A673 (cell line): ENCODE measurements at regions of chr4 and their contacts with region 1.

Region 1: DNA sequence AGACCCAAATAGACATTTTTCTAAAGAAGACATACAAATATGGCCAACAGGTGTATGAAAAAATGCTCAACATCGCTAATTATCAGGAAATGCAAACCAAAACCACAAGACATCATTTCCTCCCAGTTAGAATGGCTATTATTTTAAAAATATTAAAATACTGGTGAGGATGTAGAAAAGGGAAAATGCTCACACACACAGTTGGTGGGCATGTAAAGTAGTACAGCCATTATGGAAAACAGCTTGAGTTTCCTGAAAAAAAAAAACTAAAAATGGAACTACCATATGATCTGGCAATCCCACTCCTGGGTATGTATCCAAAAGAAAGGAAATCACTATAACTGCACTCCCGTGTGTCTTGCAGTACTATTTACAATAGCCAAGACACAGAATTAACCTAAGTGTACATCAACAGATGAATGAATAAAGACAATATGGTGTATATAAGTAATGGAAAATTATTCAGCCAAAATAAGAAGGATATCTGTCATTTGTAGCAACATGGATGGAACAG is 128.9 kb upstream of the DKK2 start:
- DNase-seq: peak; percentile 96
- H3K4me3 ChIP-seq: no peak overlapping the region
- H3K27ac ChIP-seq: peak overlapping the region; percentile 98
- H3K4me1 ChIP-seq: peaks cover 34% of the 10 kb centered on the region
- H3K27me3 ChIP-seq: no peaks in the 10 kb centered on the region
- CTCF ChIP-seq: no peak

Region 2: GRCh38 chr4:106773076-106773905 is 391.7 kb before region 1 on chr4:
- CTCF ChIA-PET with region 1: no interaction called
- POLR2A ChIA-PET with region 1: no interaction called
- intact Hi-C with region 1: no loop called
- DNase-seq: no peak
- H3K4me3 ChIP-seq: no peak overlapping the region
- H3K27ac ChIP-seq: no peak overlapping the region
- H3K4me1 ChIP-seq: no peaks in the 10 kb centered on the region
- H3K27me3 ChIP-seq: no peaks in the 10 kb centered on the region
- CTCF ChIP-seq: no peak

Region 3: DNA sequence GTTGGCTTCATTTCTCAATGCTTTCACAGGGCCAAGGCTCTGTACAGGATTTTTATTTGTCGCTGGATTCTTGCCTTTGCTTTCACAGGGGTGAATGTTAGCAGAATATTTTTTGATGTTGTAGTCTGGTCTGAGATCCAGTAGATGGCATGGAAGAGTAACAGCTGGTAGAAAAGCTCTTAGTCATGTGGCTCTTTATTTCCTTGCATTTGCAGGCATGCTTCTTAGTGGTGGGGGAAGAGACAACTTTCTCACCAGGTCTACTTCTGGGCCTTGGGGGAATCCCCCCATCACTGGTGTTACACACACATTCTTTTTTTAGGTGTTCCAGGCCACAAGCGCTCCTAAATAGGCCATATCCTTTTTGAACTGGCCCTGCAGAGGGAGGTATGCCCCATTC is 70.7 kb before region 1 on chr4:
- CTCF ChIA-PET with region 1: no interaction called
- POLR2A ChIA-PET with region 1: no interaction called
- intact Hi-C with region 1: loop called (anchors 1 kb)
- DNase-seq: peak; percentile 82
- H3K4me3 ChIP-seq: no peak overlapping the region
- H3K27ac ChIP-seq: peak overlapping the region; percentile 71
- H3K4me1 ChIP-seq: peaks cover 20% of the 10 kb centered on the region
- H3K27me3 ChIP-seq: no peaks in the 10 kb centered on the region
- CTCF ChIP-seq: peak; percentile 69

Region 4: DNA sequence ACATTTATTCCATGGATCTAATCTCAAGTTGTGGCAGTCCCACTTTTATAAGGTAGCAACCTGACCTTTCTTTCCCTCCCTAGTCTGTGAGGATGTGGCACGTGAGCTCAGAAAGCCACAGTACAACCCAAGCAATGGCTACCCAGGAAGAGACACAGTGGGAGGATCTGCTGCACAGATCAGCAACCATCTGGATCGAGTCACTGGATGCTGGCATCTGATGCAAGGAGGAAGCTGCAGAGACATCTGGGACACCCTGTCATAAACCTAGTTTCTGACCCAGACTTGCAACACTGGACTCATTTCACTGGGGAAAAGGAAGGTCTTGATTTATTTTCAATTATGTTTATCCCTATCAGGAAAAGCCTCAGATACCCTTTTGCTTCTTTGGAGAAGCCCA is 227.9 kb after region 1 on chr4:
- CTCF ChIA-PET with region 1: no interaction called
- POLR2A ChIA-PET with region 1: interaction called, 3 read pairs
- intact Hi-C with region 1: loop called (anchors 1 kb)
- DNase-seq: peak; percentile 67
- H3K4me3 ChIP-seq: no peak overlapping the region
- H3K27ac ChIP-seq: peak overlapping the region; percentile 90
- H3K4me1 ChIP-seq: peaks cover 52% of the 10 kb centered on the region
- H3K27me3 ChIP-seq: no peaks in the 10 kb centered on the region
- CTCF ChIP-seq: no peak

Region 5: DNA sequence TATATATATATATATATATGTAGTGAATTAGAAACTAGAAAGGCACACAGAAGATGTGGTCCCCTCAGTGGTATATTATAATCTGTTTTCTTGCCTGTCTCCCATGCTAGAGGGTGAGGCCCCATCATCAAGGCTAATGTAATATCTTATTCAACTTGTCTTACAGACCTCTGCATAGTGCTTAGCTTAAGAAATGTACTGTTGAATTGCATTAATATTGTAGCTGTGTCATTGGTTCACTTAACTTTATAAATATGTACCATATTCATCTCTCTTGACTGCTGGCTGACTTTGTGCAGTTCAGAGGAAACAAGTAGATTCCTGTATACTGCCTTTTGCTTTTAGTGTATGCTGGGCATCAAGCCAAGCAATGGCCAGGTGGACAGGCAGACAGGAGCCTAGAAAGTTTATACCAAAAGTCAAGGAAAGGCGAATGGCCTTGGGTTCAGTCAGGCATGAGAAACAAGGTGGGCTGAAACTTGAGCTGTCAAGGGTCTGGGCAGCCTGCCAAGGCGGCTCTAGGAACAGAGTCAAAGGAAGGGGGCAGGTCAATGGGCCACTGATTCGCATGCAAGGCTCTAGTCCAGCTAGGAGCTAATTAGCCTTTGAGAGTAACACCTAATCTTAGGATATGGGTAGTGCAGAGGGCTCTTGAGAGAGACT is 1082.5 kb after region 1 on chr4:
- CTCF ChIA-PET with region 1: no interaction called
- POLR2A ChIA-PET with region 1: no interaction called
- intact Hi-C with region 1: no loop called
- DNase-seq: peak; percentile 4
- H3K4me3 ChIP-seq: no peak overlapping the region
- H3K27ac ChIP-seq: no peak overlapping the region
- H3K4me1 ChIP-seq: no peaks in the 10 kb centered on the region
- H3K27me3 ChIP-seq: no peaks in the 10 kb centered on the region
- CTCF ChIP-seq: no peak